Common myeloid progenitor, CD34-positive (primary cell): ENCODE measurements at regions of chr1 and their contacts with region 1.

Region 1: GRCh38 chr1:66374561-66375111 is 159.3 kb upstream of the SGIP1 start:
- DNase-seq: peak in 2 of 3 donors; percentile 64 to 70
- H3K4me3 ChIP-seq: peak overlapping the region in 1 of 7 experiments; percentile 30
- H3K27ac ChIP-seq: peak overlapping the region in 1 of 2 experiments; percentile 47
- H3K4me1 ChIP-seq: peaks cover 37 to 55% (median 48%) of the 10 kb centered on the region in 4 experiments
- H3K27me3 ChIP-seq: no peaks in the 10 kb centered on the region

Region 2: DNA sequence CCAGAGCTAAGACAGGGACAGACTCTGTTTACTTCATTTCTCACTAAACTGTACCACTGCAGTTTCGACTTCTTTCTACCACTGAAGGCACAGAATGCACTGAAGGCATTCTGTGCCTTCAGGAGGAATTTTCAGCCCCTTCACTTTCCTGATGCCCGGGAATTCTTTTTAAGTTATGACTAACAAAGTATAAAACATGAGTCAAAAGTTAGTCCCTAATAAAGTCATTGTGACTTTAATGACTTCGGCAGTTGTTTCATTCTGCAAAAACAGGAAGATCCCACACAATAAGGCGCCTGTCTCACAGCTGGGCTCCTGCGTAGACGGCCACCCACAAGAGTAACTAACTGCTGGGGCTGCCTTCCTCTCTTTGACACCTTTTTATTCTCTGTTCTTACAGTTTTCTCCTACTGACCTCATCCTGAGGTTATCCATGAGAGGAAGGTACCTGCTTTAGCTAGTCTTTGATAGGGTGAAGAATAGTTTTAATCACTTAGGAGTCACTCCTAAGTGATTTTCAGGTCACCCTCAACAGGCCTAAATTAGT is 24.6 kb before region 1 on chr1:
- CTCF ChIA-PET with region 1: interaction called, 10 read pairs
- POLR2A ChIA-PET with region 1: no interaction called
- DNase-seq: peak; percentile 60 to 93 (median 87)
- H3K4me3 ChIP-seq: peak overlapping the region in 3 of 7 experiments; percentile 2 to 51 (median 15)
- H3K27ac ChIP-seq: peak overlapping the region; percentile 37 to 80
- H3K4me1 ChIP-seq: peaks cover 43 to 54% (median 48%) of the 10 kb centered on the region in 4 experiments
- H3K27me3 ChIP-seq: no peaks in the 10 kb centered on the region

Region 3: DNA sequence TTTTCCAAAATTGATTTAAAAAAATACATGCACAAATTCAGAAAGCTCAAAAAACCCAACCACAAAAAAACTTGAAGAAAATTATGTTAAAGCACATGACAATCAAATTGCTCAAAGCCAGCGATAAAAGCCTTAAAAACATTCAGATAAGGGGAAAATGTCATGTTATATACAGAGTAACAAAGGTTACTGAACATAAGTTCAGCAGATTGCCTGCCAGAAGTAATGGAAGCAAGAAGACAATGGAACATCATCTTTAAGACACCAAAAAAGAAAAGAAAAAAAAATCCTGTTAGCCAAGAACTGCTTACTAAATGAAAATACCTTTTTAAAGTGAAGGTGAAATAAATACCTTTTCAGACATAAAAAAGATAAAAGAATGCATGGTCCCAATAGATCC is 12.1 kb after region 1 on chr1:
- CTCF ChIA-PET with region 1: interaction called, 12 read pairs
- POLR2A ChIA-PET with region 1: no interaction called
- DNase-seq: peak in 1 of 3 donors; percentile 50
- H3K4me3 ChIP-seq: no peak overlapping the region
- H3K27ac ChIP-seq: no peak overlapping the region
- H3K4me1 ChIP-seq: peaks cover 0 to 8% (median 3%) of the 10 kb centered on the region in 4 experiments
- H3K27me3 ChIP-seq: no peaks in the 10 kb centered on the region